ENCODE measurements at regions of chrX and their contacts with region 1.

Region 1: DNA sequence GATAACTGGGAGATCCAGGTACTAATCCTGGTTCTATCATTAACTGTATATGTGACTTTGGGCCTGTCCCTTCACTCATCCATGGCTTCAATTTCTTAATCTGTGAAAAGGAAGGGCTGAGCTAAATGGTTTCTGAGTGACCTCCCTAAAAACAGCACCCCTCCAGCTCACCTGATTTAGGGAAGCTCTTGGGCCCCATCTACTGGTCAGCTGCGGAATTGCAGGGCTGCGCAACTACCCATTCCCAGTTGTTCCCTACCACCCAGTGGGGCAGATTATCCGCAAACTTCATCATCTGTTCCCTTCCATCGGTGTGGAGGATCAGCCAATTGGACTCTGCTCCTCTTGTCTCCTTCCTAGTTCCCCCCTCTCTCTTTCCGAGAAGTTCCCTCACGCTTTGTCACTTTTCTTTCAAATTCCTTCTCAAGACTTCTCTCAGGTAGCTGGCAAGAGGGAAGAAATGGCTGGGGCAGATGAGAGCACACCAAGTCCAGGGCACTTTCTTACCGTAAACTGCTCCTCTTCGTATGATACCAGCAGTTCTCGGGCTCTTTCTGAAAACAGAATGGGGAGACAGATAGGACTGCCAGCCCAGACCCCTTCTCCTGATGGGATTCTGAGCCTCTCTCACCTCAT is 5.8 kb downstream of the LAS1L start:
- DNase-seq: peak; percentile 8
- H3K4me3 ChIP-seq: no peak overlapping the region
- H3K27ac ChIP-seq: no peak overlapping the region
- H3K4me1 ChIP-seq: no peaks in the 10 kb centered on the region
- H3K27me3 ChIP-seq: no peaks in the 10 kb centered on the region
- CTCF ChIP-seq: peak; percentile 99 to 100

Region 2: DNA sequence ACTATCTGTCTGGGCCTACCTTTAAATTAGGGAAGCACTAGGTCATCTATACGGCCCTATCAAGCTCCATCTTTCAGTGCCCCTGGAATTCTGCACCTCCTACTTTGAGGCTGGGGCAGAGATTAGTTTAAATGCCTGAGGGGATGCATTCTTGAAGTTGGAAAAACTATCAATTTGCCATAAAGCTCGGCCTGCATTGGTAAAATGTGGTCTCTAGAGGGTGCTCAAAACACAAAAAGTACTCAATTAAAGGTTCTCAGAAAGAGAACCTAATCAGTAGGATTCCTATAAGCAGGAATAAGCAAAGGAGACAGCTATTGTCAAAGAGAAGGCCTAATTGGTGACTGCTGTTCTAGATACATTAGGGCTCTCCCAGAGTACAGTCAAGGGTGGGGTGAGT is 1435.1 kb before region 1 on chrX:
- CTCF ChIA-PET with region 1: no interaction called
- dilution Hi-C with region 1: no loop called
- in situ Hi-C with region 1: no loop called
- intact Hi-C with region 1: loop called (anchors 5 kb)
- DNase-seq: no peak
- H3K4me3 ChIP-seq: no peak overlapping the region
- H3K27ac ChIP-seq: no peak overlapping the region
- H3K4me1 ChIP-seq: no peaks in the 10 kb centered on the region
- H3K27me3 ChIP-seq: no peaks in the 10 kb centered on the region
- CTCF ChIP-seq: peak; percentile 25 to 43

Region 3: GRCh38 chrX:64894454-64895038 is 634.3 kb before region 1 on chrX:
- CTCF ChIA-PET with region 1: no interaction called
- dilution Hi-C with region 1: no loop called
- in situ Hi-C with region 1: no loop called
- intact Hi-C with region 1: loop called (anchors 1 kb)
- DNase-seq: peak; percentile 8
- H3K4me3 ChIP-seq: no peak overlapping the region
- H3K27ac ChIP-seq: no peak overlapping the region
- H3K4me1 ChIP-seq: no peaks in the 10 kb centered on the region
- H3K27me3 ChIP-seq: no peaks in the 10 kb centered on the region
- CTCF ChIP-seq: peak; percentile 48 to 66

Region 4: GRCh38 chrX:65148232-65148631 is 380.6 kb before region 1 on chrX:
- CTCF ChIA-PET with region 1: no interaction called
- dilution Hi-C with region 1: no loop called
- in situ Hi-C with region 1: no loop called
- intact Hi-C with region 1: no loop called
- DNase-seq: no peak
- H3K4me3 ChIP-seq: no peak overlapping the region
- H3K27ac ChIP-seq: no peak overlapping the region
- H3K4me1 ChIP-seq: no peaks in the 10 kb centered on the region
- H3K27me3 ChIP-seq: no peaks in the 10 kb centered on the region
- CTCF ChIP-seq: no peak

Measured in mammary epithelial cell (primary cell).